ENCODE measurements at regions of chr11 and their contacts with region 1.

Region 1: DNA sequence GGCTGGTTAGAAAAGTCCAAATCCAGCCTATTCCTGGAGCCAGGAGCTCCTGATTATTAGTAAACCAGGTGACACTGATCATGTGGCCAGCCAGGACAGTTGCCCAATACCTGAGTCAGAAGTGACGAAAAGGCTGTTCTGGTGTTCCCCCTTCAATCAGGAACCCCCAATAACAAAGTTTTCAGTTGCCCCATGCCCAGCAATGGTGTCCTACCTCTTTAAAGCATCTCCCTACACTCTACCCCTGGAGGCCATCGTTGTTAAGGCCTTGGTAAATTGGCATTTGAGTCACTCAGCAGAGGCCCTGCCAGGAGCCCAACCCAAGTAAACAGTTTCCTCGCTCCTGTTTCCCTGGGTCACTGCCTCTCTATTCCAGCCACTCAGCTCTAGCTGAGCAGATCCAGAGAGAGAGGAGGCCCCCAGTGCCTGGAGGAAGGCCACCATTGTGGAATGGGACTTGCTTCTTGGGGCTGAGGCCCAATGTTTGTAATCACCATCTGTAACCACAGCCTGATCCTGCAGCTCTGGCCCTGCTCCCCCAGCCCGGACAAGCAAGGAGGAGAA is 25.0 kb downstream of the ARHGAP1 start:
- DNase-seq: peak; percentile 71
- H3K4me3 Mint-ChIP-seq: no peak overlapping the region
- H3K27ac Mint-ChIP-seq: peak overlapping the region; percentile 97
- H3K4me1 Mint-ChIP-seq: peaks cover 14% of the 10 kb centered on the region
- H3K27me3 Mint-ChIP-seq: no peaks in the 10 kb centered on the region
- CTCF ChIP-seq: peak; percentile 10

Region 2: GRCh38 chr11:46659908-46660307 is 15.5 kb before region 1 on chr11:
- CTCF ChIA-PET with region 1: interaction called, 5 read pairs
- POLR2A ChIA-PET with region 1: interaction called, 24 read pairs
- intact Hi-C with region 1: no loop called
- DNase-seq: no peak
- H3K4me3 Mint-ChIP-seq: no peak overlapping the region
- H3K27ac Mint-ChIP-seq: peak overlapping the region; percentile 70
- H3K4me1 Mint-ChIP-seq: peaks cover 12% of the 10 kb centered on the region
- H3K27me3 Mint-ChIP-seq: no peaks in the 10 kb centered on the region
- CTCF ChIP-seq: no peak

Region 3: GRCh38 chr11:46686886-46687795 is 11.8 kb after region 1 on chr11:
- CTCF ChIA-PET with region 1: interaction called, 5 read pairs
- POLR2A ChIA-PET with region 1: interaction called, 69 read pairs
- intact Hi-C with region 1: no loop called
- DNase-seq: peak; percentile 95
- H3K4me3 Mint-ChIP-seq: peak overlapping the region; percentile 49
- H3K27ac Mint-ChIP-seq: peak overlapping the region; percentile 96
- H3K4me1 Mint-ChIP-seq: peaks cover 33% of the 10 kb centered on the region
- H3K27me3 Mint-ChIP-seq: no peaks in the 10 kb centered on the region
- CTCF ChIP-seq: no peak